Endothelial cell of umbilical vein (primary cell): ENCODE measurements at regions of chr5 and their contacts with region 1.

Region 1: GRCh38 chr5:149618581-149619251 is 37.4 kb downstream of the ARHGEF37 start:
- DNase-seq: peak; percentile 70
- H3K4me3 ChIP-seq: no peak overlapping the region
- H3K27ac ChIP-seq: no peak overlapping the region
- H3K4me1 ChIP-seq: peaks cover 6% of the 10 kb centered on the region
- H3K27me3 ChIP-seq: no peaks in the 10 kb centered on the region
- CTCF ChIP-seq: peak; percentile 67 to 75
- POLR2A ChIP-seq: no peak

Region 2: GRCh38 chr5:149381987-149382340 is 236.8 kb before region 1 on chr5:
- CTCF ChIA-PET with region 1: interaction called, 12 read pairs
- POLR2A ChIA-PET with region 1: no interaction called
- dilution Hi-C with region 1: no loop called
- intact Hi-C with region 1: loop called (anchors 1 kb)
- DNase-seq: peak; percentile 60
- H3K4me3 ChIP-seq: no peak overlapping the region
- H3K27ac ChIP-seq: no peak overlapping the region
- H3K4me1 ChIP-seq: no peaks in the 10 kb centered on the region
- H3K27me3 ChIP-seq: no peaks in the 10 kb centered on the region
- CTCF ChIP-seq: peak; percentile 86 to 97
- POLR2A ChIP-seq: no peak

Region 3: DNA sequence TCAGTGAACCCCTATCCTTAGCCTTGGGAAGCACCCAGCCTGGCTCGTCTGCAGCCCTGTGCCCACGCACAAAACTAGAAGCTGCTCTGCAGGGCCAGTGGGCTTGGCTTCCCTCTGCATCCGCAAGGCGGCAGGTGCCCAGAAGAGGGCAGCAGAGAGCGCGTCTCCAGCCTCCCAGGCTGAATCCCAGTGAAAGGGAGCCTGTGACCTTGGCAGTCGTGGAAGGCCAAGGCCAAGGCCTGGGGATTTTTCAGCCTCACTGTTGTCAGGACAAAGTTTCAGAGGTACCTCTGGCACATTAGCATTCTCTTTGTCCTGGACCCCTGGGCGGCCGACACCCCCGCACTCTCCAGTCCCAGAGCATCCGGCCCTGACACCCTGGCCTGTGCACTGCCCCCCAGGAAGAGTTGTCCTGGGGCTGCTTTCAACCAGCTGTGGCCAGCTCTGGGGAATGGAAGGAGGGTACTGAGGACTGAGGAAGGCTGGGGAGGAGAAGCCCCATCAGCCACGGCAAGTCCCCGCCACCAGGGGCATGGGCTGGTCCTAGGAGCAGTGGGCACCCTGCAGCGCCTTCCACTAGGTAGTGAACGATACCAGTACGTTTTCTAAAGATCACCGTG is 176.0 kb before region 1 on chr5:
- CTCF ChIA-PET with region 1: interaction called, 13 read pairs
- POLR2A ChIA-PET with region 1: no interaction called
- dilution Hi-C with region 1: no loop called
- intact Hi-C with region 1: loop called (anchors 1 kb)
- DNase-seq: peak; percentile 83
- H3K4me3 ChIP-seq: no peak overlapping the region
- H3K27ac ChIP-seq: no peak overlapping the region
- H3K4me1 ChIP-seq: peaks cover 27% of the 10 kb centered on the region
- H3K27me3 ChIP-seq: no peaks in the 10 kb centered on the region
- CTCF ChIP-seq: peak; percentile 93 to 94
- POLR2A ChIP-seq: no peak

Region 4: GRCh38 chr5:149526845-149527580 is 91.7 kb before region 1 on chr5:
- CTCF ChIA-PET with region 1: interaction called, 3 read pairs
- POLR2A ChIA-PET with region 1: no interaction called
- dilution Hi-C with region 1: no loop called
- intact Hi-C with region 1: loop called (anchors 5 kb)
- DNase-seq: peak; percentile 62
- H3K4me3 ChIP-seq: no peak overlapping the region
- H3K27ac ChIP-seq: no peak overlapping the region
- H3K4me1 ChIP-seq: peaks cover 34% of the 10 kb centered on the region
- H3K27me3 ChIP-seq: no peaks in the 10 kb centered on the region
- CTCF ChIP-seq: no peak
- POLR2A ChIP-seq: no peak

Region 5: GRCh38 chr5:149551200-149552037 is 67.3 kb before region 1 on chr5 and contains the start of gene CSNK1A1:
- CTCF ChIA-PET with region 1: interaction called, 8 read pairs
- POLR2A ChIA-PET with region 1: no interaction called
- dilution Hi-C with region 1: no loop called
- intact Hi-C with region 1: loop called (anchors 1 kb)
- DNase-seq: peak; percentile 99
- H3K4me3 ChIP-seq: peak within 1 kb of the TSS; percentile 81 to 97 (median 85)
- H3K27ac ChIP-seq: peak within 1 kb of the TSS; percentile 91
- H3K4me1 ChIP-seq: peaks cover 31% of the 10 kb centered on the region
- H3K27me3 ChIP-seq: no peaks in the 10 kb centered on the region
- CTCF ChIP-seq: peak; percentile 66 to 71
- POLR2A ChIP-seq: peak; percentile 94
- total RNA-seq, gene CSNK1A1: 253 and 259 TPM in 2 replicates

Region 6: DNA sequence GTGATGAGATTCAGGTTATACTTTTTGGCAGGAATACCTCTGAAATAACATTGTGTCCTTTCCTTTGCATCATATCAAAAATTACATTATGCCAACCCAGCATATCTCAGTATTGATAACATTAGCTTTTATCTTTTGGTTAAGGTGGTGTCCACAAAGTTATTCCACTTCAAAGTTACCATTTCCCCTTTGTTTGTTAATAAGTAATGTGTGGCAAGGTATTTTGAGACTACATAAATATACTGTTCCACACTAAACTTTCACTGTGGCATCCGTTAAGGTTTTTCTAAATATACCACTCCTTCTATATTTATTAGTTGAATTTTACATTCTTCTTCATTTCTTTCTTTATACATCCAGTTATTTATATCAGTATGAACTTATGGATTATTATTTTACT is 51.5 kb before region 1 on chr5:
- CTCF ChIA-PET with region 1: interaction called, 71 read pairs
- POLR2A ChIA-PET with region 1: no interaction called
- dilution Hi-C with region 1: no loop called
- intact Hi-C with region 1: loop called (anchors 1 kb)
- DNase-seq: no peak
- H3K4me3 ChIP-seq: no peak overlapping the region
- H3K27ac ChIP-seq: no peak overlapping the region
- H3K4me1 ChIP-seq: peaks cover 22% of the 10 kb centered on the region
- H3K27me3 ChIP-seq: no peaks in the 10 kb centered on the region
- CTCF ChIP-seq: no peak
- POLR2A ChIP-seq: no peak

Region 7: DNA sequence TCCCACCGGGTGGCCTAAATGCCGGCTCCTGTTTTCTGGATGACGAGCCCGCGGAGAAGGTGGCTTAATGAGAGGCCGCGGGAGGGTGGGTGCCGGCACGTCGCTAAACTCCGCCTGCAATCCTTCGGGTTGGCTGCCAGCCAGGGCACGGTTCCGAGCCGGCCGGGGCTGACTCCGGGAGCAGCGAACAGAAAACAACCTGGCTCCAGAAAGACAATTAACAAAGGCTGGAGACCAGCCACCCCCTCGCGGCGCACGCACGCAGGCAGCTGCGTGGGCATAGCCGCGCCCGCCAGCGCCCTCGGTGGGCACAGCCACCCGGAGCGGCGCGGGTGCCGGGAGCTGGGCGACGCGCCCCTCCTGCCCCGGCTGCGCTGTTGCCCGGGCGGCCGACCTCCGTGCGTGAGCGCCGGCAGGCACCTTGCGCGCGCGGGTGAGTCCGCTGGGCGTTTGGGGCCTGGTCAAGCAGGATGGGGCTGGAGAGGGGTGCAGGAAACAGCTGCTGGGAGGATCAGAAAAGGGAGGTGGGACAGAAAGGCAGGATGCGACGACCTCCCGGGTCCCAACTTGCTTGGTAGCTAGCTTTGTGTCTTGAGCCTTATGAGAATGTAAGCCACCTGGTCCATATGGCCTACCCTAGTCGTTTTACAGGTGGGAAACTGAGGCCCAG is 37.4 kb before region 1 on chr5 and contains the start of gene ARHGEF37:
- CTCF ChIA-PET with region 1: interaction called, 40 read pairs
- POLR2A ChIA-PET with region 1: no interaction called
- dilution Hi-C with region 1: no loop called
- intact Hi-C with region 1: loop called (anchors 1 kb)
- DNase-seq: peak; percentile 93
- H3K4me3 ChIP-seq: peak within 1 kb of the TSS; percentile 14 to 54 (median 34)
- H3K27ac ChIP-seq: peak within 1 kb of the TSS; percentile 83
- H3K4me1 ChIP-seq: peaks cover 29% of the 10 kb centered on the region
- H3K27me3 ChIP-seq: no peaks in the 10 kb centered on the region
- CTCF ChIP-seq: no peak
- POLR2A ChIP-seq: peak; percentile 31
- total RNA-seq, gene ARHGEF37: 7.0 and 7.1 TPM in 2 replicates

Region 8: GRCh38 chr5:149938272-149938671 is 319.6 kb after region 1 on chr5:
- CTCF ChIA-PET with region 1: no interaction called
- POLR2A ChIA-PET with region 1: no interaction called
- dilution Hi-C with region 1: no loop called
- intact Hi-C with region 1: no loop called
- DNase-seq: peak; percentile 88
- H3K4me3 ChIP-seq: no peak overlapping the region
- H3K27ac ChIP-seq: peak overlapping the region; percentile 88
- H3K4me1 ChIP-seq: peaks cover 33% of the 10 kb centered on the region
- H3K27me3 ChIP-seq: no peaks in the 10 kb centered on the region
- CTCF ChIP-seq: no peak
- POLR2A ChIP-seq: no peak